Tibial artery (tissue), 4 donors: ENCODE measurements at regions of chr10 and their contacts with region 1.

Region 1: DNA sequence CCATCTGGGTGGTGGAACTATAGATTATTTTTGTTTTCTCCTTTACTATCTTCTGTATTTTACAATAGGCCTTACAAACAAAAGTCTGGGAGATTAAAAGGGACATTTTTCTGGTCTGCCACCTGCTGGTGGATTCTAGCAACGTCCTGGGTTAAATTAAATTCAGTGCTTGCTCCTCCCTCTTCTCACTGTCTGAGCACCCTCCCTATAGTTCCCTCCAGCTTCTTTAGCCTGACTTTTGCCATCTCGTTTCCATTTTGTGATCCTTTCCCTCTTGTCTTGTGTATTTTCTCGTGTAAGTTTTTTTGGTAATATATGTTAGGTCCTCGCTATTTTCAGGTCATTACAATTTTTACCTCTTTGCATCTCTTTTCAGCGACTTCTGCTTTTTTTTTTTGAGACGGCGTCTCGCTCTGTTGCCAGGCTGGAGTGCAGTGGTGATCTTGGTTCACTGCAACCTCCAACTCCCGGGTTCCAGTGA is 16.1 kb downstream of the ANKRD16 start:
- DNase-seq: peak; percentile 62 to 74
- H3K4me3 ChIP-seq: no peak overlapping the region
- H3K27ac ChIP-seq: no peak overlapping the region
- H3K4me1 ChIP-seq: no peaks in the 10 kb centered on the region
- H3K27me3 ChIP-seq: no peaks in the 10 kb centered on the region
- CTCF ChIP-seq: peak; percentile 70 to 73

Region 2: DNA sequence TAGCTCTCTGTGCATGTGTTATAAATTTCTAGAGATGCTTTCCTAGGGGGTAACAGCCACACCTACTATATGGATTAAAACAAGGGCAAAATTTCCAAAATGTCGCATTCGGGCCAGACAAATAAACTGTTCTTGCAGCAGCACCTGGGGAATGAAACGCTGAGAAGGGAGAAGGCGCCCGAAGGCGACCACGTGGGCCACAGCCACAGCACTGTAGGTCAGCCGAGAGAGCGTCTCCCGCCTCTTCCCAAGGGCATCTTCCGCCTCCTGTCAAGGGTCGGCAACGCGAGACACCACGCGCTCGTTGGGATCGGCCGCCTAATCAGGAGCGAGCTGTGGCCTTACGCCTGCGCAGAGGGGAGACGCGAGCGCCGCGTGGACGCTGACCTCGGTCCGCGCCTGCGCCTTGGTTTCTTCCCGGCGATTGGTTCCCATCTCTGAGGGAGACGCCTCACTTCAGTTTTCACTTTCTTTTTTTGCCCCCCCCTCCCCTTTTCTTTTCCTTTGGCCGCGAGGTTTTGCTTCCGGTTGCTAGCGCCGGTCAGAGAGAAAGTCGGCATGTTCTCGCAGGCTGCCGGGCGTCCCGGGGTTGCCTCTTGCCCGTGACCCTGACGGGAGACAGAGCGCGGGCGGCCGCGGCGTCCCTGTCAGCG is 189.1 kb before region 1 on chr10 and contains the start of gene TASOR2:
- intact Hi-C with region 1: loop called (anchors 10 kb)
- DNase-seq: peak; percentile 94 to 98
- H3K4me3 ChIP-seq: peak within 1 kb of the TSS; percentile 92 to 93
- H3K27ac ChIP-seq: peak within 1 kb of the TSS; percentile 78 to 80
- H3K4me1 ChIP-seq: peaks cover 0 to 26% (median 12%) of the 10 kb centered on the region in 4 donors
- H3K27me3 ChIP-seq: no peaks in the 10 kb centered on the region
- CTCF ChIP-seq: no peak